ENCODE measurements at regions of chr10 and their contacts with region 1.

Region 1: GRCh38 chr10:132516771-132517725 is 20.5 kb upstream of the INPP5A start:
- DNase-seq: peak; percentile 95 to 98 (median 97)
- ATAC-seq: peak; percentile 84 to 92 (median 90)
- H3K4me3 ChIP-seq: peak overlapping the region; percentile 8 to 58 (median 42)
- H3K27ac ChIP-seq: peak overlapping the region; percentile 90 to 99 (median 98)
- H3K4me1 ChIP-seq: peaks cover 8 to 77% (median 68%) of the 10 kb centered on the region in 12 donors
- H3K27me3 ChIP-seq: no peaks in the 10 kb centered on the region
- CTCF ChIP-seq: no peak
- POLR2A ChIP-seq: peak in 1 of 2 donors; percentile 33

Region 2: GRCh38 chr10:132396495-132397035 is 120.5 kb before region 1 on chr10:
- intact Hi-C with region 1: loop called in 1 of 10 experiments (anchors 5 kb)
- DNase-seq: peak; percentile 68 to 85 (median 75)
- ATAC-seq: peak in 3 of 4 donors; percentile 43 to 59 (median 53)
- H3K4me3 ChIP-seq: peak overlapping the region; percentile 21 to 98 (median 70)
- H3K27ac ChIP-seq: peak overlapping the region; percentile 86 to 99 (median 96)
- H3K4me1 ChIP-seq: peaks cover 0 to 63% (median 39%) of the 10 kb centered on the region in 12 donors
- H3K27me3 ChIP-seq: no peaks in the 10 kb centered on the region
- CTCF ChIP-seq: peak in 8 of 12 donors; percentile 7 to 54 (median 36)
- POLR2A ChIP-seq: no peak

Region 3: DNA sequence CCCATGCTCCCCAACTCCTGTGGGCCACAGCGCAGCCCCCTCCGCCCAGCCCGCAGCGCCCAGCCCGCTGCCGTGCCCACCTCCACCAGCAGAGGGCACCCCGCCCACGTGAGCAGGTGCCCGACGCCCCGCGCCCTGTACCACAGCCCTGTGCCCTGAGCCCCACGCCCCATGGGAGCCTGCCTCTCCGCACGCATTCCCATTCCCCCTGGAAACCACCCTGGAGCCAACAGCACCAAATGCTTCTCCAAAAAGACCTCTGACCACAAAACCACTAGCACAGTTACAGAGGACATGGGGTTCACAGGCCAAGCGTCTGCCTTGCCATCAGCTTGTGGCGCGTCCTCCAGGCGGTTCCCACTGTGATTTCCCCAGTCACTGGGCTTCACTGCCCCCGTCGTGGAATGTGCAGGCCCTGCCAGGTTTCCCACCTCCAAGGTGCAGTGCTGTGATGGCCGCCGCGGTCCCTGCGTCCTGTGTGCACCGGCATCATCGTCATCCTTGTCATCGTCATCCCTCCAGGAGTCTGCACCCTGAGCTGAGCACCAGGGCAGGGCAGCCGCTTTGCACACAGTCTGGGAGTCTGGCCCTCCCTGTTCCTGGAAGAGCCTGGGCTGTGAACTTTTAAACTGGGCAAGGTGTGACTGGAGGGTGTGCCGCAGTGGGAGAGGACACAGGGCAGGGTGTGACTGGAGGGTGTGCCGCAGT is 58.3 kb before region 1 on chr10:
- intact Hi-C with region 1: loop called in 1 of 10 experiments (anchors 5 kb)
- DNase-seq: peak; percentile 51 to 85 (median 61)
- ATAC-seq: peak; percentile 40 to 67 (median 58)
- H3K4me3 ChIP-seq: no peak overlapping the region
- H3K27ac ChIP-seq: no peak overlapping the region
- H3K4me1 ChIP-seq: peaks cover 0 to 32% (median 22%) of the 10 kb centered on the region in 12 donors
- H3K27me3 ChIP-seq: peaks cover 0 to 10% (median 0%) of the 10 kb centered on the region in 9 donors
- CTCF ChIP-seq: peak; percentile 88 to 99 (median 96)
- POLR2A ChIP-seq: no peak

Region 4: GRCh38 chr10:132464253-132465192 is 52.5 kb before region 1 on chr10:
- intact Hi-C with region 1: loop called in 2 of 10 experiments (anchors 5 kb)
- DNase-seq: peak; percentile 81 to 95 (median 90)
- ATAC-seq: peak; percentile 80 to 87 (median 84)
- H3K4me3 ChIP-seq: peak overlapping the region in 1 of 12 donors; percentile 7
- H3K27ac ChIP-seq: peak overlapping the region; percentile 84 to 99 (median 97)
- H3K4me1 ChIP-seq: peaks cover 0 to 80% (median 42%) of the 10 kb centered on the region in 12 donors
- H3K27me3 ChIP-seq: no peaks in the 10 kb centered on the region
- CTCF ChIP-seq: no peak
- POLR2A ChIP-seq: no peak

Region 5: DNA sequence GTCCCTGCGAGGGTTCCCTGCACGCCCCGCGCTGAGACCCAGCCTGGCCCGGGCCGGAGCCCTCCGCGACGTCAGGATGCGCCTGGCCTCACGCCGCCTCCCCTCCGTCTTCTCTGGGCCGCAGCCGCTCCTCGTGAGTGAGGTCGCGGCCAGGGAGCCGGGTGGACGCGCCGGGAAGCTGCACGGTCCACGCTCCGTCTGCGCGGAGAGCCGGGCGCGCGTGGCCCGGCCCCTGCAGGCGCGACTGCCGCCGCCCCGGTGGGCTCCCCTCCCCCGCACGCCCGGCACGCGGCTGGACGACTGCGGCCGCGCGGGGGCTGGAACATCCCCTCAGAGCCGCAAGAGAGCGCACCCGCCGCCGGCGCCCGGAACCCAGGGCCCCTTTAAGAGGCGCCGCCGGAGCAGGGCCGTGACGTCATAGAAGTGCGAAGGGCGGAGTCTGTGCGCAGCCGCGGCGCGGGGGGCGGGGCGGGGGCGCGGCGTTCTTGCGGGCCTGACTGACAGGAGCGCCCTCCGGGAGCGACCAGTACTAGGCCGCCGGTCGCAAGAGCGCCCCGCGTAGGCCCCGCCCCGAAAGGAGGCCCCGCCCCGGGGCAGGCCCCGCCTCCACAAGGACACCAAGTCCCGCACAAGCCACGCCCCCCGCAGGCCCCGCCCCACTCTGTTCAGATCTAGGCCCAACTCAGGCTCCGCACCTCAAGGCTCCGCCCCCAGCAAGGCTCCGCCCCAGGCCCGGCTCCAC is 20.1 kb after region 1 on chr10:
- intact Hi-C with region 1: loop called in 8 of 10 experiments (anchors 1 to 2 kb)
- DNase-seq: peak; percentile 100
- ATAC-seq: peak; percentile 93 to 97 (median 96)
- H3K4me3 ChIP-seq: peak overlapping the region; percentile 56 to 87 (median 70)
- H3K27ac ChIP-seq: peak overlapping the region; percentile 57 to 96 (median 88)
- H3K4me1 ChIP-seq: peaks cover 0 to 58% (median 47%) of the 10 kb centered on the region in 12 donors
- H3K27me3 ChIP-seq: no peaks in the 10 kb centered on the region
- CTCF ChIP-seq: peak in 11 of 12 donors; percentile 20 to 61 (median 48)
- POLR2A ChIP-seq: peak in 1 of 2 donors; percentile 53

Region 6: DNA sequence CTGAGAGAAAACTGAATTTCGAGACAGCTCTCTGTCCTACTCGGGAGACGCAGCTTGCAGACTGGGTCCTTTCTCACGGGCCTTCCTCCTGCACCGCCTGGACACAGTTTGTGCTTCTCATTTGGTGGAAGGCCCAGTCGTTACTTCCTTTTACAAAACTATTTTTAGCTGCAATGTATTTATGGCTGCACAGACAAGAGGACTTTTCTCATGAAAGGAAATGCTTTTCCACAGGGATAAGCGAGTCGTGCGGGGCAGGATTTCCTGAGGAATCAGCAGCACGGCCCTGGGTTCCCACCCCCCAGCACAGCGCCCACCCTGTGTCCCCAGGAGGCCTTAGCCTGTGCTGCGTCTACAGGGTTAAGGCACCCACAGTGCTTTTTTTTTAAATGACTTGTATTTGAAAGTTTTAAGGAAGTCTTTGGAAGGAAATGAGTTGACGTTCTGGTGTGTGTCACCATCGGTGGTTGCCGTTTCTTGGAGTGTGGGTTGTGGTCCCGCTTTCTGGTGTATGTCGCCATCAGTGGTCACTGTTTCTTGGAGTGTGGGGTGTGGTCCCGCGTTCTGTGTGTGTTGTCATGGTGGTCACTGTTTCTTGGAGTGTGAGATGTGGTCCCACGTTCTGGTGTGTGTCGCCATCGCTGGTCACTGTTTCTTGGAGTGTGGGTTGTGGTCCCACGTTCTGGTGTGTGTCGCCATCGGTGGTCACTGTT is 71.4 kb after region 1 on chr10:
- intact Hi-C with region 1: loop called in 3 of 10 experiments (anchors 2 to 5 kb)
- DNase-seq: peak in 4 of 5 donors; percentile 64 to 82 (median 79)
- ATAC-seq: peak; percentile 52 to 79 (median 56)
- H3K4me3 ChIP-seq: peak overlapping the region in 9 of 12 donors; percentile 1 to 39 (median 24)
- H3K27ac ChIP-seq: peak overlapping the region; percentile 58 to 87 (median 78)
- H3K4me1 ChIP-seq: peaks cover 29 to 100% (median 89%) of the 10 kb centered on the region in 12 donors
- H3K27me3 ChIP-seq: no peaks in the 10 kb centered on the region
- CTCF ChIP-seq: no peak
- POLR2A ChIP-seq: no peak

Region 7: GRCh38 chr10:132627666-132628531 is 110.9 kb after region 1 on chr10:
- intact Hi-C with region 1: loop called in 9 of 10 experiments (anchors 1 to 10 kb)
- DNase-seq: peak; percentile 54 to 71 (median 68)
- ATAC-seq: peak; percentile 1 to 33 (median 11)
- H3K4me3 ChIP-seq: peak overlapping the region in 10 of 12 donors; percentile 3 to 39 (median 20)
- H3K27ac ChIP-seq: peak overlapping the region; percentile 73 to 98 (median 88)
- H3K4me1 ChIP-seq: peaks cover 21 to 80% (median 65%) of the 10 kb centered on the region in 12 donors
- H3K27me3 ChIP-seq: no peaks in the 10 kb centered on the region
- CTCF ChIP-seq: no peak
- POLR2A ChIP-seq: peak in 1 of 2 donors; percentile 22

Measured in heart left ventricle (tissue), 16 donors.